Thyroid gland (tissue), 4 donors: ENCODE measurements at regions of chr17 and their contacts with region 1.

Region 1: DNA sequence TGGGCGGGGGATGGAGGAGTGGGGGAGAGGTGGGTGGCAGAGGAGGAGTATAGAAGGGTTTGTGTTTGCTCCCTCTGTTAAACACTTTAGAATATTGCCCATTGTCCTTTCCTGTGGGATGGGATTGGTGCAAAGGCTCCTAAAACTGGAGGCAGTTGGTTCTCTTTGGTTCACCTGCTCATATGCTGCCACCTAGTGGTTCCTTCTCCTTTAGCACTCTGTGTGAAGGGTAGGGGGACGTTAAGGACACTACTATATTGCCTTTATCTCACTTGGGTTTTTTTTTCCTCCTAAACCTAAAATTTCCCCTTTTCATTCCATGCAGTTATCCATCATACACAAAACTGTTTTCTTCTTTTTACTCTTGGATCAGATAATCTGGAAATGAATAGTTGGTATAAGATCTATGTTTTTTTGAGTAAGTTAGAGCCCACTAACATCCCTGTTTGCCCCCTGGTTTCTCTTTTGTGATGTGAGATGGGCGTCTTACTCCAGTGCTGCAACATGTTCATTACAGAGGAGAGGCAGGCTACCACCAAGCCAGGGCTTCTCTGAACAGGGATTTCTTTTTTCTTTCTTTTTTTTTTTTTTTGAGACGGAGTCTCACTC is 23.8 kb downstream of the SNX11 start:
- DNase-seq: peak; percentile 56 to 59
- H3K4me3 ChIP-seq: no peak overlapping the region
- H3K27ac ChIP-seq: no peak overlapping the region
- H3K4me1 ChIP-seq: peaks cover 3 to 9% of the 10 kb centered on the region in 2 donors
- H3K27me3 ChIP-seq: no peaks in the 10 kb centered on the region
- CTCF ChIP-seq: peak; percentile 58 to 91 (median 82)
- POLR2A ChIP-seq: no peak

Region 2: GRCh38 chr17:48024937-48025906 is 106.1 kb before region 1 on chr17:
- intact Hi-C with region 1: loop called (anchors 2 kb)
- DNase-seq: peak; percentile 100
- H3K4me3 ChIP-seq: peak overlapping the region; percentile 1 to 39 (median 37)
- H3K27ac ChIP-seq: peak overlapping the region; percentile 86 to 92 (median 88)
- H3K4me1 ChIP-seq: peaks cover 27 to 33% of the 10 kb centered on the region in 2 donors
- H3K27me3 ChIP-seq: no peaks in the 10 kb centered on the region
- CTCF ChIP-seq: peak; percentile 43 to 96 (median 84)
- POLR2A ChIP-seq: peak in 1 of 2 donors; percentile 80

Region 3: GRCh38 chr17:48081858-48082257 is 49.5 kb before region 1 on chr17:
- intact Hi-C with region 1: loop called (anchors 2 kb)
- DNase-seq: no peak
- H3K4me3 ChIP-seq: no peak overlapping the region
- H3K27ac ChIP-seq: peak overlapping the region in 1 of 3 donors; percentile 15
- H3K4me1 ChIP-seq: peaks cover 33 to 45% of the 10 kb centered on the region in 2 donors
- H3K27me3 ChIP-seq: no peaks in the 10 kb centered on the region
- CTCF ChIP-seq: no peak
- POLR2A ChIP-seq: no peak